ENCODE measurements at regions of chr2 and their contacts with region 1.

Region 1: DNA sequence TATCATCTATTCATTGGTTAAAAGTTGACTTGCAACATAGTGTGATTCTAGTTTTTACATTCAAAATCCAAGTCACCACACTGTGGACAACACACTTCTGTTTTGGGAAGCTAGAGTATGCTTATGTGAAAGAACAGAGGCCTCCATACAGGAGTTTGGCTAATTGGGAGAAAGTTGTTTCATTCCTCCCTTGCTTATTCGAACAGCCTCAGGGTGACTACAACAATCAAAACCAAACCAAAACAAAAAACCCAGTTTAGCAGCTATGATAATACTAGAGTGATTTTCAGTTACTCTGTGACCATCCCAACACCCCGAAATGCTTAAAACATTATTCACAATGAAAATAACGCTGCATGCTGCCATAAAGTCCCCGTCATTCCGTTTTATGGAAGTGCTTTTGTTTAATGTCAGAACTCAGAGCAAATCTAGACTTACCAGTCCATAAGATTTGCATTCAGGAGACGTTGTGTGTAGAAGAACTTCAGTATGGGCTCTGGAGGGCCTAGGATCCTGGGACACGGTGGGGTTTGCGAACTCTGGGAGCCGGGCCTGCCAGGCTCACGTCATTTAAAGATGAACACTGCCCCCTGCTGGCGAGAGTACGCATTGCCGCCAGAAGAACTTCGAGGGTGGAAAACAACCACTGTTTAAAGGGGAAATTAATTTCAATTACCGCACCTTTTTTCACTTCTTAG is 111.4 kb downstream of the FTCDNL1 start:
- DNase-seq: peak; percentile 56
- H3K4me3 ChIP-seq: peak overlapping the region; percentile 0
- H3K27ac ChIP-seq: no peak overlapping the region
- H3K4me1 ChIP-seq: peaks cover 5% of the 10 kb centered on the region
- H3K27me3 ChIP-seq: peaks cover 40% of the 10 kb centered on the region
- CTCF ChIP-seq: peak; percentile 90

Region 2: GRCh38 chr2:198322294-198322693 is 1417.3 kb before region 1 on chr2:
- intact Hi-C with region 1: loop called (anchors 10 kb)
- DNase-seq: no peak
- H3K4me3 ChIP-seq: no peak overlapping the region
- H3K27ac ChIP-seq: no peak overlapping the region
- H3K4me1 ChIP-seq: no peaks in the 10 kb centered on the region
- H3K27me3 ChIP-seq: peaks cover 58% of the 10 kb centered on the region
- CTCF ChIP-seq: peak; percentile 23

Region 3: GRCh38 chr2:199830531-199830930 is 91.0 kb after region 1 on chr2:
- intact Hi-C with region 1: no loop called
- DNase-seq: no peak
- H3K4me3 ChIP-seq: no peak overlapping the region
- H3K27ac ChIP-seq: no peak overlapping the region
- H3K4me1 ChIP-seq: no peaks in the 10 kb centered on the region
- H3K27me3 ChIP-seq: no peaks in the 10 kb centered on the region
- CTCF ChIP-seq: no peak